ENCODE measurements at regions of chrX and their contacts with region 1.

Region 1: DNA sequence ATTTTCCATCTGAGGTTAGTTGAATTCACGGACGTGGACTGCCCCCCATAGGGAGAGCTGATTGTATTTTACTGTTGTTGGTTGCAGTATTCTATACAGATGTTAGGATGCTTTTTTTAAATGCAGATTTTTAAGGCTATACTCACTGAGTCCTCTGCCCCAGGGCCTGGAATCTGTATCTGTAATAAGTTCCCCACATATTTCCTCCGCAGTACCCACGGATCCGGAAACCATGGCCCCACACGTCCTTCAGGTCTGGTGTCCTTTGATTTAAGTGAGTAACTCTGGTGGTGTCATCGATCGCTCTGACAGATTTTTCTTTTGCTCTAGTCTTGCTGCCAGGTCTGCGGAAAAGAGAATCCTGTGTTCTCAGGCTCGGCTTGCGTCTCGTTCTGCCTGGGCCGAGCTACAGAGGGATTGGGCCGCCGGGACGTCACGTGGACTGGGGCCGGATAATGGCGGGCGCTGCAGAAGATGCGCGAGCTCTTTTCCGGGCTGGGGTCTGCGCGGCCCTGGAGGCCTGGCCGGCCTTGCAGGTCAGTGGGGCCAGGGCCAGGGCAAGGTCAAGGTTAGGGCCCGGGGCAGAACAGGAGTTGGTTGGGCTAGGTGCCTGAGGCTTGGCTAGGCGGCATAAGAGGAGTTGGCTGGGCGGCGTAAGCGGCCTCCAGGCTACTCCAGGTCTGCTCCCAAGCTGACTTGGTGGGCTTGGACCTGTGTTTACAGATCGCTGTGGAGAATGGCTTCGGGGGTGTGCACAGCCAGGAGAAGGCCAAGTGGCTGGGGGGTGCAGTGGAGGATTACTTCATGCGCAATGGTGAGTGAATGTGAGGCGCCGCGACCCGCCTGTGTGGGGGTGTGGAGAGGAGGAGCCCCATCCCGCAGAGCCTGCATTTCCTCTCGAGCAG is at the start of gene TSR2:
- DNase-seq: peak; percentile 87
- H3K4me3 ChIP-seq: peak within 1 kb of the TSS; percentile 89 to 97 (median 94)
- H3K27ac ChIP-seq: peak within 1 kb of the TSS; percentile 45
- H3K4me1 ChIP-seq: peaks cover 12% of the 10 kb centered on the region
- H3K27me3 ChIP-seq: no peaks in the 10 kb centered on the region
- CTCF ChIP-seq: peak in 1 of 2 donors; percentile 8
- POLR2A ChIP-seq: peak; percentile 28
- total RNA-seq, gene TSR2: 22.8 and 25.1 TPM in 2 replicates

Region 2: DNA sequence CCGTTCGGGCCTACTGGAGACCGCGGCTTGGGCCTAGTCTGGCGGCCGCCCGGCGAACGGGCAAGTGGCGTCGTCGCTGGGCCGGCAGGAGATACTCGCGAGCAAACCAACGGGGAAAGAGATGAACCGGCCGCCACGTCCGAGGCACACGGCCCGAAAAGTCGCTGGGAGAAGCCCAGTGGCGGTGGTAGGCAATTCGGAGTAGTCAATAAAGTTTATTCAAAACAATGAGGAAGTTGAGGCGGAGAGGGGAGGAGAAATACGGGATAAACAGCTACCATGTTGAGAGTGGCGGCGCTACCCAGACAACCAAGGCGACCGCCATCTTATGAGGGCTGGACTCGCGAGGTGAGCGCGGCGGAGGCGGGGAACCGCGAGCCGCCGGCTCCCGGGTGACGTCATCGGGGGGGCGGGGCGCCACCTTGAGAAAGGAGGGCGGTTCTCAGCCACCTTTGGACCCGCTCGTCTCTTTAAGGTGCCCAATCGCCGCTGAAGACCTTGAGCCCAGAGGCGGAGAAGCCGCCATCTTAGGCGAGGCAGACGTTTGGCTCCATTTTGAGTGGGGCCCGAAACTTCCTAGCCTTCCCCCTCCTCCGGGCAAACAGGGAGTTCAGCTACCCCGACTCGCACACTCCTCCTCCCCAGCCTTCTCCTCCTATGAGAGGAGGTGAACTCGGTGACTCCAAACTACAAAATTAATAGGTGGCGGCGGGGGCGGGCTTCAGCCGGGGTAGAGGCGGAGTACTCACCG is 395.9 kb before region 1 on chrX and contains the start of gene PHF8:
- CTCF ChIA-PET with region 1: interaction called, 15 read pairs
- POLR2A ChIA-PET with region 1: interaction called, 4 read pairs
- dilution Hi-C with region 1: no loop called
- intact Hi-C with region 1: loop called (anchors 1 kb)
- DNase-seq: peak; percentile 95
- H3K4me3 ChIP-seq: peak within 1 kb of the TSS; percentile 66 to 87 (median 70)
- H3K27ac ChIP-seq: peak within 1 kb of the TSS; percentile 81
- H3K4me1 ChIP-seq: peaks cover 13% of the 10 kb centered on the region
- H3K27me3 ChIP-seq: no peaks in the 10 kb centered on the region
- CTCF ChIP-seq: no peak
- POLR2A ChIP-seq: peak; percentile 70
- total RNA-seq, gene PHF8: 23.2 and 25.5 TPM in 2 replicates

Region 3: DNA sequence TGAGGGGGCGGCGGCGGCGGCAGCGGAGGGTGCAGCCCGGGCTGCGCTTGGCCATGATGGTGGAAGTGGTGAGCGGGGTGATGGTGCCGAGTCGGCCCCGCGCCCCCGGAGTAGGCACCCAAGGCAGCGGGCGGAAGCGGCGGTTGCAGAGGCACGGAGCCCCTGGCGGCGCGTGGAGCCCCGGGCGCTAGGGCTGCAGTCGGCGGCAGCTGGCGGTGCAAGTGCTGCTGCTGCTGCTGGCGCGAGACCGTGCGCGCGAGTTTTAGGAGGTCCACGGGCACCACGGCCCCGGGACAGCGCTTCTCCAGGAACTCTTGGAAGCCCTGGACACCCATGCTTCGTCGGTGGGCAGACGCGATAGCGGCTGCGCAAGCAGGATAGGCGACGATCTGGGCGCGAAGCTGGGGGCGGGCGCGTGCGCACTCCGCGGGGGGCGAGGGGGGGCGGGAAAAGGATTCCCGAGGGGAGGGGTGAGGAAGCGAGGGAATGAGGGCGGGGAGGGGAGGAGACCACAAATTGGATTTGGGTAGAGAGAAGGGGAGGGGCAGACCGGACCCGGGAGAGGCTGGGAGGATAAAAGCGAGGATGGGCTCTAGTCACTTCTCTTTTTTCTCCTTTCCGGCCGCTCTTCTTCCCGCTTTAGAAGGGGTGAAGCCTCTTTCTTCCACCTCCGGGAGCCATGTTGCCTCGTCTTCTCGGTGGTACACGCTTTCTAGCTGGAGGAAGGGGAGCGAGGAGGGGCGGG is 257.2 kb before region 1 on chrX and contains the start of gene FAM120C:
- CTCF ChIA-PET with region 1: no interaction called
- POLR2A ChIA-PET with region 1: no interaction called
- dilution Hi-C with region 1: no loop called
- intact Hi-C with region 1: loop called (anchors 1 kb)
- DNase-seq: peak; percentile 76
- H3K4me3 ChIP-seq: peak within 1 kb of the TSS; percentile 55 to 81 (median 81)
- H3K27ac ChIP-seq: peak within 1 kb of the TSS; percentile 72
- H3K4me1 ChIP-seq: peaks cover 35% of the 10 kb centered on the region
- H3K27me3 ChIP-seq: no peaks in the 10 kb centered on the region
- CTCF ChIP-seq: no peak
- POLR2A ChIP-seq: peak; percentile 55
- total RNA-seq, gene FAM120C: 10.1 and 11.4 TPM in 2 replicates

Region 4: DNA sequence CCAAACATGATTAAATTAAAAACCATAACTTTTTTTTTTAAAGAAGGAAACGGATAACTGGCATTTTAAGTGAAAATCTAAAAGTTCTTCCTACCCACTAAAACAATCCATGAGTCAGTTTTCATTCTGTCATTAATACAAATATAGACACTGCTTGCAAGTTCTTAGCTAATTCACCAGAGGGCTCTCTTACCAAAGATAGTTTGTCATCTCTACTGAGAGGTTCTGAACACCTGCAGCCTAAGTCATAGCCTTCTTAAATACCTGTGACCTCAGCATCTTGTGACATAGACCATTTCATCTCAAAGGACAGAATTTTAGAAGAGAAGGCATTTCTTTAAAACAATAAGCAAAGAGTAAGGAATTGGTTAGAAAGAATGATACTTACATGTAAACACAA is 191.9 kb before region 1 on chrX:
- CTCF ChIA-PET with region 1: interaction called, 6 read pairs
- POLR2A ChIA-PET with region 1: no interaction called
- dilution Hi-C with region 1: no loop called
- intact Hi-C with region 1: loop called (anchors 10 kb)
- DNase-seq: peak; percentile 18
- H3K4me3 ChIP-seq: no peak overlapping the region
- H3K27ac ChIP-seq: no peak overlapping the region
- H3K4me1 ChIP-seq: no peaks in the 10 kb centered on the region
- H3K27me3 ChIP-seq: no peaks in the 10 kb centered on the region
- CTCF ChIP-seq: peak in 1 of 2 donors; percentile 6
- POLR2A ChIP-seq: no peak

Region 5: DNA sequence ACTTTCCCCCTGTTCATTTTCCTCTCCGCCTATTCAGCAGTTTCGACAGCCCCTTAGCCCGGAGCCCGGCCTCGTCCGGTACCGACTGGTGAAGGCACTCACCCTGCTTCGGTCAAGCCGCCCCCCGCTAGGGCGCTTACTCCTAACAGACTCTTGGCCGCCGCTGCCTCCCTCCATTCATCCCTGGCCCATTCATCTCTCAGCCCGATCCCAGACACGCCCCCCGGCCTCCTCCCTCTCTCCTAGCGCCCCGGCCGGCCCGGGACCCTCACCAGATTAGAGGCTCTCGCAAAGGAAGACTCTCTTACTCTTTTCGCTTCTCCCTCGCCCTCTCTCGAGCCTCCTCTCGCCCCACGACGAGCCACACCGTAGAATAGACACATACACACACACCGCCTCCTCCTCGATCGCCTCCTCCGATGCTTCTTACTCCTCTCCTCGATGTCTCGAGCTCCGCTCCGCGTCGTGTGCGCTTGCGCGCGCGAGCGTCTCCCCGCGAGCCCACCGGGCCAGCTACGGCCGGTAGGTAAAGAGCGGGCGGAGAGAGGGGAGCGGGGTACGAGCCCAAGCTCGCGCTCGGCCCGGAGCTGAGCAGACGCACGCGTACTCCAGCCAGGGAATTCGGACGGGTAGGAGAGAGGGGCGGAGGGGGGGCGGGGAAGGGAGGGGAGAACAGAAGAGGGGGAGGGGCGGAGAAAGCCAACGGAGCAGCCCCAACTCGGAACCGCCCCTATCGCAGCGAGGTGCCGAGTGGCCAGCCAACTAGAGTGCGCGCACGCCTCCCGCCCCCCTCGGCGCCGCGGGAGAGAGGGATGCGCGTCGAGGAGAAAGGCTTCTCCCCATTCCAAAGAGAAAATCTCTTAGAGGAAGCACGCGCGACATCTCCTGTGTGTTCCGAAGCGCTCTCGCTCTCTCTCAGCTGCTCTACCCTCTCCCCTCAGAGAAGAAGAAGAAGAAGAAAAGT is 82.5 kb before region 1 on chrX and contains the start of gene WNK3:
- CTCF ChIA-PET with region 1: interaction called, 3 read pairs
- POLR2A ChIA-PET with region 1: interaction called, 4 read pairs
- dilution Hi-C with region 1: no loop called
- intact Hi-C with region 1: loop called (anchors 10 kb)
- DNase-seq: peak; percentile 69
- H3K4me3 ChIP-seq: peak within 1 kb of the TSS; percentile 18 to 56 (median 44)
- H3K27ac ChIP-seq: no peak within 1 kb of the TSS
- H3K4me1 ChIP-seq: no peaks in the 10 kb centered on the region
- H3K27me3 ChIP-seq: peaks cover 3 to 6% of the 10 kb centered on the region in 2 experiments
- CTCF ChIP-seq: no peak
- POLR2A ChIP-seq: no peak
- total RNA-seq, gene WNK3: 2.6 and 2.7 TPM in 2 replicates

Region 6: GRCh38 chrX:54452920-54453319 is 12.7 kb after region 1 on chrX:
- CTCF ChIA-PET with region 1: no interaction called
- POLR2A ChIA-PET with region 1: no interaction called
- dilution Hi-C with region 1: no loop called
- intact Hi-C with region 1: no loop called
- DNase-seq: no peak
- H3K4me3 ChIP-seq: no peak overlapping the region
- H3K27ac ChIP-seq: no peak overlapping the region
- H3K4me1 ChIP-seq: no peaks in the 10 kb centered on the region
- H3K27me3 ChIP-seq: no peaks in the 10 kb centered on the region
- CTCF ChIP-seq: no peak
- POLR2A ChIP-seq: no peak

Region 7: DNA sequence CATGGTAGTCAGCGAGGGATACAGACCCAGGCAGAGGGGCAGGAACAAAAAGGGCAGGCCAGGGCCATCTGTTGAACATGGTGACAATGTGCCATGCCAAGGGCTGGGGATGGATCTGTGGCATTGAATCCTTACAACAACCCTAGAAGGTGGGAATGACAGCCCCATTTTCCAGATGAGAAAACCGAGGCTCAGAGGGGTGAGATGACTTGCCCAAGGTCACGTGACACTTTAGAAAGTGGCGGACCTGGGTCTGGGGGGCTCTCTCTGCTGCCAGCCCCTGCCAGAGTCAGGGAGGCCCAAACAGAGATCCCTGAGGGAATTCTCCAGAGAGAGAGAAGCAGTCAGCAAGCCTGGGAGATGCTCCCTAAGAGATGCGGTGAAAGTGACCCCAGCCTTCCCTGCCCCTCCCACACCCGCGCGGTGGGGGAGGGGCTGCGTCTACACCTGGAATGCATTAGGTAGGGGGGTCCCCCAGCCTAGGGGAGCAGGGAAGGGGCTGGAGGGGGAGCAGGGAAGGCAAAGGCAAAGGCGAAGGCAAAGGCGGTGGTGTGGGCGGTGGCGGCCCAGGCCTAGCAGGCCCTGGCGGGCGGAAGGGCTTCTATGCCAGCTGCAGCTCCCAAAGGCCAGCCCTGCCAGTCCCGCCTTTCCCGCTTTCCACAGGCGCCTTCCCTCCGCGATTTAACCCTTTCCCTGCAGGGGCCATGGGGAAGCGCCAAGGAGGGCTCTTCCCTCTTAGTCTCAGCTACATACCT is 42.8 kb after region 1 on chrX:
- CTCF ChIA-PET with region 1: no interaction called
- POLR2A ChIA-PET with region 1: interaction called, 4 read pairs
- dilution Hi-C with region 1: no loop called
- intact Hi-C with region 1: loop called (anchors 2 kb)
- DNase-seq: no peak
- H3K4me3 ChIP-seq: no peak overlapping the region
- H3K27ac ChIP-seq: peak overlapping the region; percentile 12
- H3K4me1 ChIP-seq: peaks cover 18% of the 10 kb centered on the region
- H3K27me3 ChIP-seq: no peaks in the 10 kb centered on the region
- CTCF ChIP-seq: no peak
- POLR2A ChIP-seq: no peak

Region 8: DNA sequence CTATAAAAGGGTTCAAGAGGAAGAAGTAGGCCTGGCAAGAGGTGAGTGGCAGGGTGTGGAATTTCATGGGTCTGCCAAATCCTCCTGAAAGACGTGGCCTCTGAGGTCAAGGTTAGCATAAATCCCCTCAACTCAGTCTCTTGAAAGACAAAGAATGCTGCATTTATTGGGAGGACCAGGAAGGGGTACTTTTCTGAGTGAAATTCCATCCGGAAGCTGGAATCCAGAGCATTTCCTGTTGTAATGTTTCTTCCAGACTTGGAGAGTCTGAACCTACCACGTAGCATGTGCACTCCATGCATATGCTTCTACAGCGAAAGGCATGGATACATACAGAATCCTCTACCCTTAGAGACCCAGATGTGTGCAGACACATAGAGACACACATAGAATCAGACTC is 69.2 kb after region 1 on chrX:
- CTCF ChIA-PET with region 1: no interaction called
- POLR2A ChIA-PET with region 1: no interaction called
- dilution Hi-C with region 1: no loop called
- intact Hi-C with region 1: no loop called
- DNase-seq: peak; percentile 60
- H3K4me3 ChIP-seq: no peak overlapping the region
- H3K27ac ChIP-seq: peak overlapping the region; percentile 70
- H3K4me1 ChIP-seq: peaks cover 9% of the 10 kb centered on the region
- H3K27me3 ChIP-seq: no peaks in the 10 kb centered on the region
- CTCF ChIP-seq: no peak
- POLR2A ChIP-seq: no peak

Region 9: DNA sequence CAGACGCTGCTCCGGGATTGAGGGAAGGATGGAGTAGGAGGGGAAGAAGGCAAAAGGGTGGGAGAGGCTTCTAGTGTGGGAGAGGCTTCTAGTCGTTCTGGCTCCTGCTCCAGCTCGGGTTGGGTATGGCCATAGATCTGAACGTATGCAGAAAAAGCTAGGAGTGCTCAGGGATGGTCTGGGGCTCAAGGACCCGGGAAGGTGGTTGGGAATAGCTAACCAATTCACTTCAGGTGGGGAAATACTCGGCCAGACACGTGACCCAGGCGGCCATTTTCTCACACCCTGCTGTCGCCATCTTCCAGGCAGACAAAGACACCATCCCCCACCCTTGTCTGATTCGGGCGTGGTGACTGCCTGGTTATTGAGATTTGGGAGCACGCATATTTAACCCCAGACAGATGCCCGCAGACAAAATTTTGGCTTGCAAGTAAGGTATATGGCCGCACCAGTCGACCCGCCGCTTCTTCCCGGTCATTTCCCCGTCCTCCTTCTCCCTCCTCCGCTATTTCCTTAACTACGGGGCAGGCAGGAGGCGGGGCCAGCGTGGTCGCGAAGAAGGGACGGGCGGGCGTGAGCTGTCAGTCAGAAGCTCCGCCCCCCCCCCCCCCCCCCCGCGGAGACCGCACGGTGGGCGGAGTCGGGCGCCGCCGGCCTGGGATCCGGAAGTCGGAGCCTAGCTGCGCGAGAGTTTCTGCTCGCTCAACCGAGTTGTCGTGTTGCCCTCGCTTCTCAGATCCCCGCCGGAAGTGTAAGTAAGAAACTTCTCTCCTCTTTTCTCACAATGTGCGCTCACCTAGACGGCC is 89.5 kb after region 1 on chrX and contains the start of gene GNL3L:
- CTCF ChIA-PET with region 1: no interaction called
- POLR2A ChIA-PET with region 1: interaction called, 3 read pairs
- dilution Hi-C with region 1: no loop called
- intact Hi-C with region 1: loop called (anchors 1 kb)
- DNase-seq: peak; percentile 78
- H3K4me3 ChIP-seq: peak within 1 kb of the TSS; percentile 17 to 86 (median 69)
- H3K27ac ChIP-seq: peak within 1 kb of the TSS; percentile 73
- H3K4me1 ChIP-seq: peaks cover 10% of the 10 kb centered on the region
- H3K27me3 ChIP-seq: no peaks in the 10 kb centered on the region
- CTCF ChIP-seq: no peak
- POLR2A ChIP-seq: peak; percentile 79
- total RNA-seq, gene GNL3L: 46.0 and 48.0 TPM in 2 replicates

Measured in endothelial cell of umbilical vein (primary cell).